GM10248 (cell line): ENCODE measurements at regions of chr6 and their contacts with region 1.

Region 1: DNA sequence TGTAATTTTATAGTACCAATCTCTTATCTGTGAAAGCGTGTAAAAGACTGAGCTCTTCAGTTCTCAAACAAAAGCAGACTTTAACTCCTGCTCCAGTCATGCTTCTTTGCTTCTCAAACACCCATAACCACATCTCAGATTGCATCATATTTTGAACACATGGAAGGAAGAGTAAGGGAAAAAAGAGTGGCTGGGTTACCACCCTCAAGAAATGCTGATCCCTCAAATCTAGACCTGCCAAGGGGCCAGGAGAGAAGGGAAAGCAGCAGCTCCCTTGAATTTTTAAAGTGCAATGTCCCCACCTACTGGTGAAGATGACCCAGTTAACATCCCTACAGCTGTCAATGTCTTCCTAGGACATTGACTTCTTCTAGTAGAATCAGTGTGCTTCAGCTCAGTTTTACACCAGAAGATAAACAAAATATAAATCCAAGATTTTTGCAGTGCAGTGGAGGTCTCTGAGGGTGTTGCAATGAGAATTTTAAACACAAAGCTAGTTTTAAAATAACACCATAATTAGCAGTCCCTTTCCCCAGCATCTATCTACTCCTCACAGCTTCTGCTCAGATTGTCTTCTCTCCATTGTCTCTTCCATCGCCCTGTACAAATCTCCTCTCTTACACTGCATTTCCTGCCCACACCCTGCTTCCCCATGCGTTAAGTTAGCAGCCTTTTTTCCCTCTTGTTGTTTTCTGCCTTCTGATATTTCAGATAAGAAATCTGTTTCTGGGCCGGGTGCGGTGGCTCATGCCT is 22.6 kb upstream of the HLA-DQB2 start:
- DNase-seq: peak; percentile 53
- CTCF ChIP-seq: peak; percentile 66

Region 2: DNA sequence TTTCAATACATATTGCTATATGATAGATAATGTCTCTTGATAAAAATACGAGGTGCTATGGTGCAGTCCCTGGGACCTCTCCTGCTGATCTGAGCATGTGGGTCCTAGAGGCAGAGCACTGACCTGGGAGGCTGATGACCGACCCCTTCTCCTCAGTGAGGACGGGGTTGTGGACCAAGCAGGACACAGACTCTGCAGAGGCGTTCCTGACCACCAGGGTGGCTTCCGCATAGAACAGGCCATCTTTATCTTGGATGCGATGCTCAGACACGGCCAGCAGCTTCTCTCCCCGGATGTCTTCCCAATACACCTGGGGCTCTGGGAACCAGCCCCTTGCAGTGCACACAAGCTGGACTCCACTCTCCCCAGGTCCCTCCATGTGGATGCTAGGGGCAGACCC is 383.1 kb before region 1 on chr6:
- CTCF ChIA-PET with region 1: interaction called, 234 read pairs
- POLR2A ChIA-PET with region 1: no interaction called
- DNase-seq: no peak
- CTCF ChIP-seq: no peak

Region 3: DNA sequence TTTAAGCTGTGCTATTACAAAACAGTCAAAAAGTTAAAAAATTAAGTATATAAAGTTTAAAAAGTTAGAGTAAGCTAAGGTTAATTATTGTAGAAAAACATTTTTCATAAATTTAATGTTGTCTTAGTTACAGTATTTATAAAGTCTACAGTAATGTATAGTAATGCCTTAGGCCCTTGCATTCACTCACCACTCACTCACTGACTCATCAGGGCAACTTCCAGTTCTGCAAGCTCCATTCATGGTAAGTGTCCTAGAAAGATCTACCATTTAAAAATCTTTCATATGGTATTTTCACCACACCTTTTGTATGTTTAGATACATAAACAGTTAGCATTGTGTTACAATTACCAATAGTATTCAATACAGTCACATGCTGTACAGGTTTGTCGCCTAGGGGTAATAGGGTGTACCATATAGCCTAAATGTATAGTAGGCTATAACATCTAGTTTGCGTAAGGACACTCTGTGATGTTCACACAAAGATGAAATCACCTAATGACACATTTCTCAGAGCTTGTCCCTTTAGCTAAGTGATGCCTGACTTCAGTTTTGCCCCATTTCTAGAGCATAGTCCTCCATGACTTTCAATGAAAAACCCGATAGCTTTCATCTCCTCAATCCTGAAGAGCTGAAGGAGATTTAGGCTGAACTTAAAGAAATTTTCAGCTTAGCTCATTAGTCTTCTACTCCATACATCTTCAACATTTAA is 361.2 kb before region 1 on chr6:
- CTCF ChIA-PET with region 1: interaction called, 234 read pairs
- POLR2A ChIA-PET with region 1: no interaction called
- DNase-seq: no peak
- CTCF ChIP-seq: no peak

Region 4: GRCh38 chr6:32700391-32701040 is 85.4 kb before region 1 on chr6:
- CTCF ChIA-PET with region 1: interaction called, 26 read pairs
- POLR2A ChIA-PET with region 1: interaction called, 3 read pairs
- DNase-seq: peak; percentile 45
- CTCF ChIP-seq: peak; percentile 67

Region 5: GRCh38 chr6:32774426-32774825 is 11.5 kb before region 1 on chr6:
- CTCF ChIA-PET with region 1: interaction called, 14 read pairs
- POLR2A ChIA-PET with region 1: no interaction called
- DNase-seq: no peak
- CTCF ChIP-seq: no peak

Region 6: DNA sequence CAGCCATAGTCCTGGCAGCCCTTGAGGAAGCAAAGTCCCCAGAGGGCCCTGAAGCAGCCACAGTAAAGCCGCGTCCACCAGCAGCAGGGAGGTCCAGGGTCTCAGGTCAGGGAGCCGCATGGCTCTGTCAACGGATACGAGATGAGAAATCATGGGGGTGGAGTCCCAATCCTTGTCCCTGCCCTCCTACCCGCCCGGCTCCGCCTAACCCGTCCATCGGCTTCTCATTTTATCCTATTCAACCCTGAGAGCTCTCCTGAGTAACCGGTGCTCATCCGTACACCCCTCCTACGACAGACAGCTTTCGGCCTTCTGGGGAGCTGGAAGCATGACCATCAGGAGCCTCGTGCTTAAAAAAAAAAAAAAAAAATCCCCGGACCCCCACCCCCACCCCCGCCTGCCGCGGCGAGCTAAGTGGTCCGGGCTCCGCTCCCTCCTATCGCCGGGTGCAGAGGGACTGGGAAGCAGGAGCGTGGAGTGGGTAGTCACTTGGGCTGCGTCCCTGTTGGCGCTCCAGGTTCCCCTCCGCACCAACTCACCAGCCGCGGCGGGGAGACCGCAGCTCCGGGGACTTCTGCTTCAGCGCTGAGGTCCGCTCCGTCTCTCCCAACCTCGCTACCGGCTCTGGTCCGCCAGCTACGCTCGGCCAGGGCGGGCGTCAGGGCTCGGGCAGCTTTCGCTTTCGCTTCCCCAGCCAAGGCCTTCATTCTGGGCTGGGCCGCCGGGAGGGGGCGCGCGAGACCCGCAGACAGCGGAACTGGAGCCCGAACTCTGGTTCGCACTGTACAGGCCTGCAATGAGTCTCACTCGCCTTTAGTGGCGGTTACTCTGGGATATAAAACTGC is 52.4 kb after region 1 on chr6 and contains the start of gene TAP2:
- CTCF ChIA-PET with region 1: interaction called, 10 read pairs
- POLR2A ChIA-PET with region 1: no interaction called
- DNase-seq: peak; percentile 94
- CTCF ChIP-seq: peak; percentile 98

Region 7: GRCh38 chr6:32912951-32913350 is 127.0 kb after region 1 on chr6:
- CTCF ChIA-PET with region 1: no interaction called
- POLR2A ChIA-PET with region 1: no interaction called
- DNase-seq: no peak
- CTCF ChIP-seq: no peak